GM10248 (cell line): ENCODE measurements at regions of chr6 and their contacts with region 1.

Region 1: DNA sequence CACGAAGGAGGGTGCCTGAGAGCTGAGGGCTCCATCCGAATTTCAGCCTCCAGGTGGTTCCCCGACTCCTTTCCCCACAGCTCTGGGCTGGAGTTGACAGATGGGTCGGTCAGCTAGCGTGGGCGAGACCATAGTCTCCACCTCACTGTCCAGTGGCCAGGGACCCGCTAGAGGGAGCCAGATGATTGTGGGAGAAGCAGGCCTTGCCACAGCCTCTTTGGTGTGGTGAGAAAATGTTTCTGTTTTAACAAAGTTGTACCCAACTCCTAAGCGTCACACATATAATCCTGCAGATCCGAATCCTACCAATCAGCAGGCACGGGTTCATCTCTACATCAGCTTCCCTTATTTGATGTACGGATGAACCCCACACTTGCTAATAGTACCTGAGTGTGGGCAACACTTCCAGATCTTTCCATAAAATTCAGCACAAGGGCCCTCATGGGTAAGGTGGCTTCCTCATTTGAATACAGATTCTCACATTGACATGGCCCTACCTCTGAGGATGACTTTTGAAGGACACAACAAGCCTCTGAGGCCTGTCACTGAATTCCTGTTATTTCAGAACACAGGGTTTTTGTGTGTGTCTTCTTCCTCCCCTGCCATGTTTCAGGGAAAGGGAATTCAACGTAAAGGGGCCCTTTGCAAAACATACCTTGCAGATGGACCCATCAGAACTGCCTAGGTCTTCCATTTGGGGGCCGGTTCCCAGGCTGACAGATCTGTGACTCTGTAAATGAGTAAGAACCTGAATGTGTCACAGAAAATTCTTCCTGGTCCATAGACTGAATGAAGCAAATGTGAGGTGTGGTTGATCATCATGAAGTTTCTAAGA is 103.2 kb upstream of the DUSP22 start:
- DNase-seq: peak; percentile 85
- CTCF ChIP-seq: peak; percentile 87

Region 2: GRCh38 chr6:209432-210103 is 20.5 kb after region 1 on chr6:
- CTCF ChIA-PET with region 1: interaction called, 620 read pairs
- POLR2A ChIA-PET with region 1: no interaction called
- DNase-seq: peak; percentile 87
- CTCF ChIP-seq: no peak

Region 3: GRCh38 chr6:313087-313486 is 124.0 kb after region 1 on chr6:
- CTCF ChIA-PET with region 1: interaction called, 12 read pairs
- POLR2A ChIA-PET with region 1: interaction called, 4 read pairs
- DNase-seq: no peak
- CTCF ChIP-seq: no peak

Region 4: DNA sequence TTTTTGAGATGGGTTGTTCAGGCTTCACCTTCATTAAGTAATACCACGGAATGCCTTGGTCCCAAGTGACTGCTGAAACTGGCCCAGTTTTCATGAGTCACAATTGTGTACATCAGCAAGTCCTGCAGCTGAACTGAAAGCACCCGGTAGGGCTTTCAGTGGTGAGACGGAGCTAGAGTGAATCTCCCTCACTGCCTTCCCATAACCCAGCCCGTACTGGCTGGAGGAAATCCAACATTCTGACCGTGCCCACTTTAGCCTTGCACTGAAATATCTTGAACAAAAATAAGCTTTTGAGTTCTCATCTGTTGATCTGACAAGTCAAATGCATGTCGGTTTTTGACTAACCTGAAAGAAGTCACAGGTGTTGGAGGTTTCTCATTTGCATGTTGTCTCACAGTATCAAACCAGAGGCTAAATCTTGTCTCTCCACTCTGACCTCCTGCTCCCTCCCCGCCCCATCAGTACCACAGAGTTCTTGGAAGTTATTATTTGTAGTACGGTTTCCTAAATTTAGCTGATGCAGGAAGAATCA is 139.2 kb after region 1 on chr6:
- CTCF ChIA-PET with region 1: interaction called, 31 read pairs
- POLR2A ChIA-PET with region 1: no interaction called
- DNase-seq: peak; percentile 84
- CTCF ChIP-seq: no peak

Region 5: GRCh38 chr6:399785-400534 is 210.9 kb after region 1 on chr6:
- CTCF ChIA-PET with region 1: interaction called, 13 read pairs
- POLR2A ChIA-PET with region 1: interaction called, 3 read pairs
- DNase-seq: peak; percentile 76
- CTCF ChIP-seq: no peak